Posterior cingulate gyrus (tissue), 11 donors: ENCODE measurements at regions of chr16 and their contacts with region 1.

Region 1: DNA sequence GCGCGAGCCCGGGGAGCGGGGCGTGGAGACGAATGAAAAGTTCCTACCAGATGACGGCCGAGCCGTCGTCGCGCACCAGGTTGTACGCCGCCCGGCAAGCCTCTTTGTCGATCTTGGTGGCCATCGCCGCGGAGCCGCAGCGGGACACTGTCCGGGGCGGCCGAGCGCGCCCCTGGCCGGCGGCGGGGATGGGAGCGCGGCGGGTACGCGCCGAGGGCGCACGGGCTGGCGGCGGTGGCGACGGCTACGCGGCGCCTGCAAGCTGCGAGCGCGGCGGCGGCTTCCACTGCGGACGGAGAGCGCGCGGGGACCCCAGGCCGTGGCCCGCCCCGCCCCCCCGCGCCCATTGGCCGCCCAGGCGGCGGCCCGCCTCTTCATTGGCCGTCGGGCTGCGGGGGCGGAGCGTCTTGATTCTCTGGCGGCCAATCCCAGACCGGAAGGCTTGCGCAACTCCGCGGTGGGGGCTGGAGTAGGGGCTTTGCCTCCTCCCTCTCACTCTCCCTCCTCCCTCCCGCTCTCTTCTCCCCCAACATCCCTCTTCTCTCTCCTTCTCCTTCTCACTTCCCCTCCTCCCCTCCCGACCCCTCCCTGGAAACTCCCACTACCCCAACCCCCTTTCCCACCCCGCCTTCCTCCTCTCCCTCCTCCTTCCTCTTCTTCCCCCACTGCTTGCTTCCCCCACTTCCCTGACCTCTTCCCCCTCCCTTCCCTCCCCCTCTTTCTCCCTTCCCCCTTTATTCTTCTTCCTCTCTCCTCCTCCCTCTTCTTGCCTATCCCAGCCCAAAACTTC is at the start of gene COTL1:
- DNase-seq: peak; percentile 88 to 99 (median 95)

Region 2: DNA sequence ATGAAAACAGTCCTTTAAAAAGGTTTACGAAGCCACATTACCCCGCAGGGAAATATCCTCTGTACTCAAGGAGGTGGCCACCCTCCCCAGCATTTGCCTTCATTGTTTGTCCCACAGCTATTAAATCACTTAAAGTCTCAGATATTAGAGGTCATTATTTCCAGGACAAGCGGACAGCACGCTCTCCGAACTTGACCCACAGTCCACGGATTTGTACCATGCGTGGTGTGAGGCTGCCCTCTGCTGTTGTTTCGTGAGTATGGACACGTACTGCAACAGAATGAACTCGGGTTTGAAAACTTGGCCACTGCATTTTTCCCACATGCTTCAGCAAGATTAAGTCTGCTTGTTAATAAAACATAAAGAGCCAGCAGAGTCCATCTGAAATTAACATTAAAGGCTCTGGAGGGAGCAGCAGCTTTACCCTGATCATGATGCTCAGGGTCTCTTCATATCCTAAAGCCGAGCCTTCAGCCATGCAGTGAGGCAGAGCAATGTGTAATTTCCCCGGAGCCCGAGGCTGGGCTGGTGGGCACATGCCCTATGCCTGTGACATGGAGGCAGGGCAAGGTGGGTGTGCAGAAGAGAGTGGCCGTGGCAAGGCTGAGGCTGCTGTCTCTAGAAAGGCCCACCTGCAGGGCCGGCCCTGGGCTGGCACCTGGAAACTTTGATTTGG is 133.3 kb before region 1 on chr16:
- intact Hi-C with region 1: no loop called
- DNase-seq: peak; percentile 53 to 96 (median 82)

Region 3: GRCh38 chr16:84511180-84511824 is 106.7 kb before region 1 on chr16:
- intact Hi-C with region 1: loop called (anchors 1 kb)
- DNase-seq: peak; percentile 75 to 97 (median 82)

Region 4: DNA sequence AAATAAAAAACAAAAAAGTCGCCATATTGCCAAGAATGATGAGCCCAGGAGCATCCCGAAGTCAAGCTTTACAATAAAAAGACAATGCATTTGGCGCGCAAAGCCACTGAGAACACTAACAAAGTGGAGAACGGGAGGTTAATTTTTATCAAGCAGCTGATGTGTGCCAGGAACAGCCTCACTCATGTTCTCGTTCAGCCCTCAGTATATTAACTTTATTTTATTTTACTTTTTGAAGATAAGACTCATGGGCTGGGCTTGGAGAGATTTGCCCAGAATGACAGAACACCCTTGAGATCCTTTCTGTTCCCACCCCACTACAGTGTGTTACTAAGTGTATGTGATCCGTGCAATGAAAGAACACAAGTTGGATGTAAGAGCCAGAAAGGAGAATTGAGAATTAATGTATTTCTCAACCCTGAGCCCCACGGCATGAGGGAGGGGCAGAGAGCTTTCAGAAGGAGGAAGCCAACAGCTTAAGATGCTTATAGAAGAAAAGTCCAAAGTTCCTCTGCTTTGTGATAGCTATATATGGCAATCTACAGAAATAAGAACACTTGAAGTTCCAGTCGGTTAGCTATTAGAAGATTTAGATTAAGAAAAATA is 48.5 kb before region 1 on chr16:
- intact Hi-C with region 1: no loop called
- DNase-seq: peak in 1 of 10 donors; percentile 20